ENCODE measurements at regions of chr19 and their contacts with region 1.

Region 1: GRCh38 chr19:41872775-41873647 is 4.1 kb upstream of the CD79A start:
- DNase-seq: peak; percentile 62
- ATAC-seq: peak in 1 of 2 donors; percentile 59

Region 2: GRCh38 chr19:41771410-41771809 is 101.6 kb before region 1 on chr19:
- intact Hi-C with region 1: no loop called
- DNase-seq: no peak
- ATAC-seq: no peak

Region 3: GRCh38 chr19:41945135-41945766 is 72.2 kb after region 1 on chr19:
- intact Hi-C with region 1: loop called in 1 of 2 experiments (anchors 5 kb)
- DNase-seq: no peak
- ATAC-seq: peak; percentile 29 to 79

Region 4: DNA sequence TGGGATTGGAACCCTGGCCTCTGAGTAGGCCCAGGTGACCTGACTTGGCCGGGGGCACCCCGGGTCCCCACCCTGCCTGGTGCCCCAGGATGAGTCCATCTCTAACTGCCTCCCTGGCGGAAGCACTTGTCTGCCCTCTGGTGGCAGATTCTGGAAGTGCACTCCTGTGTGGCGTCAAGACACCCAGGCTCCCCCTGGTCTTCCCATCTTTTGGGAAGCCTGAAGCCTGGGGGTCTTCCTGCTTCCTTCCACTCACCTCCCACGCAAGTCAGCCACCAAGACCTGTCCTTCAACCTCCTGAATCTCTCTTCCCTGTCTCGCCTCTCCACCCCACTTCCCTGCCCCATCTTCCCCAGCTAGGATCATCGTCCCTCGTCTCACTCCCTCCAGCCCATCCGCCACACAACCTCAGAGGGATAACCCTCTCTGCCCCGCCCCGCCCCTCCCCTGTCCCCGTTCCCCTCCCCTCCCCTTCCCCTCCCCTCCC is 78.7 kb after region 1 on chr19:
- intact Hi-C with region 1: loop called (anchors 2 to 5 kb)
- DNase-seq: peak; percentile 78
- ATAC-seq: peak; percentile 79

Region 5: GRCh38 chr19:42075616-42076379 is 202.8 kb after region 1 on chr19 and contains the start of gene ZNF574:
- intact Hi-C with region 1: loop called in 1 of 2 experiments (anchors 10 kb)
- DNase-seq: peak; percentile 99
- ATAC-seq: peak; percentile 99
- total RNA-seq, gene ZNF574: 8.3 to 9.1 TPM

Measured in left cardiac atrium (tissue), 4 donors.